ENCODE measurements at regions of chr11 and their contacts with region 1.

Region 1: GRCh38 chr11:17384002-17384511 is 4.4 kb downstream of the KCNJ11 start:
- DNase-seq: peak; percentile 67

Region 2: GRCh38 chr11:16969010-16969999 is 414.8 kb before region 1 on chr11:
- in situ Hi-C with region 1: no loop called
- DNase-seq: no peak

Region 3: GRCh38 chr11:17457396-17458173 is 73.5 kb after region 1 on chr11:
- in situ Hi-C with region 1: no loop called
- DNase-seq: no peak

Region 4: GRCh38 chr11:17504330-17505107 is 120.5 kb after region 1 on chr11:
- in situ Hi-C with region 1: loop called (anchors 10 kb)
- DNase-seq: peak; percentile 83